ENCODE measurements at regions of chr2 and their contacts with region 1.

Region 1: GRCh38 chr2:217886720-217887309 is 116.0 kb downstream of the TNS1 start:
- DNase-seq: no peak
- ATAC-seq: peak; percentile 96
- H3K4me3 ChIP-seq: no peak overlapping the region
- H3K27ac ChIP-seq: no peak overlapping the region
- H3K4me1 ChIP-seq: no peaks in the 10 kb centered on the region
- H3K27me3 ChIP-seq: peaks cover 0 to 2% of the 10 kb centered on the region in 2 experiments; a peak in 2 of 4 replicates
- CTCF ChIP-seq: peak; percentile 75 to 79 (median 76)
- EP300 ChIP-seq: no peak
- POLR2A ChIP-seq: no peak
- RAD21 ChIP-seq: peak; percentile 67

Region 2: GRCh38 chr2:217899231-217900009 is 12.6 kb after region 1 on chr2:
- CTCF ChIA-PET with region 1: interaction called, 10 read pairs
- POLR2A ChIA-PET with region 1: no interaction called
- RAD21 ChIA-PET with region 1: no interaction called
- SMC1A ChIA-PET with region 1: interaction called, 4 read pairs
- in situ Hi-C with region 1: no loop called
- intact Hi-C with region 1: no loop called
- DNase-seq: no peak
- ATAC-seq: peak; percentile 94
- H3K4me3 ChIP-seq: no peak overlapping the region
- H3K27ac ChIP-seq: no peak overlapping the region
- H3K4me1 ChIP-seq: no peaks in the 10 kb centered on the region
- H3K27me3 ChIP-seq: peaks cover 4 to 6% of the 10 kb centered on the region in 2 experiments; a peak in 2 of 4 replicates
- CTCF ChIP-seq: peak; percentile 50 to 74 (median 62)
- EP300 ChIP-seq: no peak
- POLR2A ChIP-seq: no peak
- RAD21 ChIP-seq: no peak

Region 3: DNA sequence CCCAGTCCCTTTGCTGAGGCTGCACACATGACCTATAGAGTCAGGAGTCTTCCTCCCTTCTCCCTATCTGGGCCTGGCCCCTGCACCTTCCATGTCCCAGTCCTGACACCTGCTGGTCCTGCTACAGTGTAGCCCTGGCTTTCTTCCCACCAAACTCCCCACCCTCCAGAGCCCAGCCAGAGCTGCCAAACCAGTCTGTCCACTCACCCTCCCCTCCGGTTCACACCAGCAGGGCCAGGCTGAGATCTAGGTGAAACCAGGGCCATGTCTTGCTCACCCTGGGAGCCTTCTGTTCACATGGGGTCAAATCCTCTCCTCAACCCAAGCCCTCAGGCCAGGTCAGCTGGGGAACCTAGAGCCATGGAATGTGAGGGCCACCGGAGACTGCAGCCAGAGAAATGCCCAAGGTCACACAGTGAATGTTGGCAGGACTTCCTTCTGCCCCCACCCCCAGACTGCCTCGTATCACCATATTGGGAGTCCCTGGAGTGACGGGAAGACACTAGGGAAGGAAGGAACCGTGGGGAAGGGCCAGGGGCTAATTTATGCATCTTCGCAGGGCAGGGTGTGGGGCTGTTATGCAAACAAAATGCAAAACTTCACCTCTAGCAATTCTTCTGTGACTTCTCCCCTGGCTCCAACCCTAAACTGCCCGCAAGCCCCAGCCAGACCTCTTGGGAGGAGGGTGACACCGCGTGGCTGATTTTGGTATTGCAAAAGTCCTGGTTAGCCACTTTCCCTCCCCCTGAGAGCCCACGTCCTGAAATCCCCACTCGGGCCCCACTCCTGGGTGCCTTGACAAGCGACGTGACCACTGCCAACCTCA is 101.4 kb after region 1 on chr2:
- CTCF ChIA-PET with region 1: interaction called, 3 read pairs
- POLR2A ChIA-PET with region 1: no interaction called
- RAD21 ChIA-PET with region 1: no interaction called
- SMC1A ChIA-PET with region 1: no interaction called
- in situ Hi-C with region 1: no loop called
- intact Hi-C with region 1: loop called (anchors 2 kb)
- DNase-seq: no peak
- ATAC-seq: peak; percentile 94
- H3K4me3 ChIP-seq: no peak overlapping the region
- H3K27ac ChIP-seq: no peak overlapping the region
- H3K4me1 ChIP-seq: no peaks in the 10 kb centered on the region
- H3K27me3 ChIP-seq: no peaks in the 10 kb centered on the region; a peak in 1 of 4 replicates
- CTCF ChIP-seq: peak; percentile 78 to 82 (median 81)
- EP300 ChIP-seq: no peak
- POLR2A ChIP-seq: no peak
- RAD21 ChIP-seq: peak; percentile 83

Region 4: GRCh38 chr2:218063486-218063885 is 176.7 kb after region 1 on chr2:
- CTCF ChIA-PET with region 1: interaction called, 5 read pairs
- POLR2A ChIA-PET with region 1: no interaction called
- RAD21 ChIA-PET with region 1: no interaction called
- SMC1A ChIA-PET with region 1: no interaction called
- in situ Hi-C with region 1: no loop called
- intact Hi-C with region 1: loop called (anchors 5 kb)
- DNase-seq: peak; percentile 60
- ATAC-seq: peak; percentile 94
- H3K4me3 ChIP-seq: no peak overlapping the region
- H3K27ac ChIP-seq: no peak overlapping the region
- H3K4me1 ChIP-seq: peaks cover 15% of the 10 kb centered on the region
- H3K27me3 ChIP-seq: no peaks in the 10 kb centered on the region; a peak in 1 of 4 replicates
- CTCF ChIP-seq: no peak
- EP300 ChIP-seq: no peak
- POLR2A ChIP-seq: no peak
- RAD21 ChIP-seq: no peak

Region 5: GRCh38 chr2:218252509-218253231 is 365.9 kb after region 1 on chr2:
- CTCF ChIA-PET with region 1: no interaction called
- POLR2A ChIA-PET with region 1: no interaction called
- RAD21 ChIA-PET with region 1: no interaction called
- SMC1A ChIA-PET with region 1: no interaction called
- in situ Hi-C with region 1: no loop called
- intact Hi-C with region 1: no loop called
- DNase-seq: no peak
- ATAC-seq: no peak
- H3K4me3 ChIP-seq: no peak overlapping the region
- H3K27ac ChIP-seq: no peak overlapping the region
- H3K4me1 ChIP-seq: peaks cover 8% of the 10 kb centered on the region
- H3K27me3 ChIP-seq: no peaks in the 10 kb centered on the region
- CTCF ChIP-seq: no peak
- EP300 ChIP-seq: no peak
- POLR2A ChIP-seq: no peak; the same call in 1 of the 2 replicates
- RAD21 ChIP-seq: no peak